Activated naive CD4-positive, alpha-beta T cell treated with anti-CD3 and anti-CD28 coated beads for 36 hours (primary cell): ENCODE measurements at regions of chr3 and their contacts with region 1.

Region 1: GRCh38 chr3:157174649-157175498 is 14.9 kb upstream of the CCNL1 start:
- DNase-seq: peak; percentile 99
- H3K4me3 Mint-ChIP-seq: peak overlapping the region; percentile 85
- H3K27ac Mint-ChIP-seq: peak overlapping the region; percentile 95
- H3K4me1 Mint-ChIP-seq: peaks cover 25% of the 10 kb centered on the region
- H3K27me3 Mint-ChIP-seq: no peaks in the 10 kb centered on the region

Region 2: GRCh38 chr3:156106721-156107373 is 1068.0 kb before region 1 on chr3:
- CTCF ChIA-PET with region 1: no interaction called
- intact Hi-C with region 1: no loop called
- DNase-seq: no peak
- H3K4me3 Mint-ChIP-seq: no peak overlapping the region
- H3K27ac Mint-ChIP-seq: no peak overlapping the region
- H3K4me1 Mint-ChIP-seq: no peaks in the 10 kb centered on the region
- H3K27me3 Mint-ChIP-seq: no peaks in the 10 kb centered on the region

Region 3: GRCh38 chr3:156483961-156484787 is 690.7 kb before region 1 on chr3:
- CTCF ChIA-PET with region 1: no interaction called
- intact Hi-C with region 1: loop called (anchors 1 kb)
- DNase-seq: peak; percentile 70
- H3K4me3 Mint-ChIP-seq: peak overlapping the region; percentile 51
- H3K27ac Mint-ChIP-seq: peak overlapping the region; percentile 81
- H3K4me1 Mint-ChIP-seq: peaks cover 42% of the 10 kb centered on the region
- H3K27me3 Mint-ChIP-seq: no peaks in the 10 kb centered on the region

Region 4: GRCh38 chr3:156826144-156826895 is 348.6 kb before region 1 on chr3 and contains the start of gene LEKR1:
- CTCF ChIA-PET with region 1: no interaction called
- intact Hi-C with region 1: loop called (anchors 1 kb)
- DNase-seq: peak; percentile 69
- H3K4me3 Mint-ChIP-seq: peak within 1 kb of the TSS; percentile 93
- H3K27ac Mint-ChIP-seq: peak within 1 kb of the TSS; percentile 92
- H3K4me1 Mint-ChIP-seq: peaks cover 16% of the 10 kb centered on the region
- H3K27me3 Mint-ChIP-seq: no peaks in the 10 kb centered on the region
- total RNA-seq, gene LEKR1: 0.43 to 0.77 TPM

Region 5: GRCh38 chr3:157122116-157122515 is 52.8 kb before region 1 on chr3:
- CTCF ChIA-PET with region 1: no interaction called
- intact Hi-C with region 1: no loop called
- DNase-seq: peak; percentile 52
- H3K4me3 Mint-ChIP-seq: no peak overlapping the region
- H3K27ac Mint-ChIP-seq: peak overlapping the region; percentile 16
- H3K4me1 Mint-ChIP-seq: peaks cover 26% of the 10 kb centered on the region
- H3K27me3 Mint-ChIP-seq: no peaks in the 10 kb centered on the region

Region 6: GRCh38 chr3:157159762-157160657 is 14.9 kb before region 1 on chr3 and contains the start of gene CCNL1:
- CTCF ChIA-PET with region 1: interaction called, 44 read pairs
- intact Hi-C with region 1: loop called (anchors 1 kb)
- DNase-seq: peak; percentile 94
- H3K4me3 Mint-ChIP-seq: peak within 1 kb of the TSS; percentile 93
- H3K27ac Mint-ChIP-seq: peak within 1 kb of the TSS; percentile 99
- H3K4me1 Mint-ChIP-seq: peaks cover 43% of the 10 kb centered on the region
- H3K27me3 Mint-ChIP-seq: no peaks in the 10 kb centered on the region
- total RNA-seq, gene CCNL1: 206 to 214 TPM

Region 7: DNA sequence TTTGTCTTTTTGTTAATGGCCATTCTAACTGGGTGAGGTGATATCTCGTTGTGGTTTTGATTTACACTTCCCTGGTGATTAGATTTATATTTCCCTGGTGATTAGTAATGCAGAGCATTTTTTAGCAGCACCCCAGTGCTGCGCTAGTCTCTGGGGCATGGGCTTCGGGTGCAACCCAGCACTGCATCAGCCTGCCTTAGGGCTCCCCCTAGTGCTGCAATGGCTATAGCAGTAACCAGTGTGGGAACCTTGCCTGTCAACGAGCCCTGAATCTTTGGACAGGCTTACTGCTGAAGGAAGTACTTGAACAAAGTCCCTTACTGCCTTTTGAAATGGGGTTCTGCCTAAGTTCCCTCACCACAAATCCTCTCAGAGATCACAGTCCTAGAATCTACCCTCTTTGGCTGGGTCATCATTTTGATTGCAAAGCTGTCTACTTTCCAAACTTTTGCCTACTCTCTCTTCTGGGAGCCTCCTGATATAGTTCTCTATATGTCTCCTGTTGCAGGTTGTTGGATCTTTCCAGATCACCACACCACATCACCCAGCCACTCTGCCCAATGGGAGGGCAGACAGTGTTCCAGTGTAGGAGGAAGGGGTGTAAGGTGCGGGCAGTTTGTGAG is 64.3 kb after region 1 on chr3:
- CTCF ChIA-PET with region 1: interaction called, 13 read pairs
- intact Hi-C with region 1: loop called (anchors 1 kb)
- DNase-seq: peak; percentile 88
- H3K4me3 Mint-ChIP-seq: no peak overlapping the region
- H3K27ac Mint-ChIP-seq: no peak overlapping the region
- H3K4me1 Mint-ChIP-seq: peaks cover 2% of the 10 kb centered on the region
- H3K27me3 Mint-ChIP-seq: no peaks in the 10 kb centered on the region

Region 8: GRCh38 chr3:157261000-157261399 is 86.1 kb after region 1 on chr3:
- CTCF ChIA-PET with region 1: no interaction called
- intact Hi-C with region 1: no loop called
- DNase-seq: no peak
- H3K4me3 Mint-ChIP-seq: no peak overlapping the region
- H3K27ac Mint-ChIP-seq: no peak overlapping the region
- H3K4me1 Mint-ChIP-seq: no peaks in the 10 kb centered on the region
- H3K27me3 Mint-ChIP-seq: no peaks in the 10 kb centered on the region